ENCODE measurements at regions of chr11 and their contacts with region 1.

Region 1: DNA sequence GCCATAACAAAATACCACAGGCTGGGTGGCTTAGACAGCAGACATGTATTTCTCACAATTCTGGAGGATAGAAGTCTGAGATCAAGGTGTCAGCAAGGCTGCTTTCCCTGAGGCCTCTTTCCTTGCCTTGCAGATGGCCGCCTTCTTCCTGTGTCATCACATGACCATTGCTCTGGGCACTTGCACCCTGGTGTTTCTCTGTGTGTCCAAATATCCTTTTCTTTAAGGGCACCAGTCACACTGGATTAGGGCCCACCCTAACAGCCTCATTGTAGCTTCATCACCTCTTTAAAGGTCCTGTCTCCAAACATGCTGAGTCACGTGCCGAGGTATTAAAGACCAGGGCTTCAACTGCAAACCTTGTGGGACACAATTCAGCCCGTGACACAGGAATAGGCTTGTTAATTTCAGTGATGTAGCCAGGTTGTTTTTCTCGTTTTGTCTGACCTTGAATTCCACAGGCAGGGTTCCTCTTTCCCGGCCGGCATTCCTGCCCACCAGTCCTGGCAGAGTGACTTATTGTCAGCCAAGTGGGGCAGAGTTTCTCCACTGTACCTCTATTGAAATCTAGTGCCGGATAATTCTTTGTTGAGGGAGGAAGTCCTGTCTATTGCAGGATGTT is 100.1 kb downstream of the KCNQ1OT1 start:
- DNase-seq: no peak
- ATAC-seq: no peak

Region 2: DNA sequence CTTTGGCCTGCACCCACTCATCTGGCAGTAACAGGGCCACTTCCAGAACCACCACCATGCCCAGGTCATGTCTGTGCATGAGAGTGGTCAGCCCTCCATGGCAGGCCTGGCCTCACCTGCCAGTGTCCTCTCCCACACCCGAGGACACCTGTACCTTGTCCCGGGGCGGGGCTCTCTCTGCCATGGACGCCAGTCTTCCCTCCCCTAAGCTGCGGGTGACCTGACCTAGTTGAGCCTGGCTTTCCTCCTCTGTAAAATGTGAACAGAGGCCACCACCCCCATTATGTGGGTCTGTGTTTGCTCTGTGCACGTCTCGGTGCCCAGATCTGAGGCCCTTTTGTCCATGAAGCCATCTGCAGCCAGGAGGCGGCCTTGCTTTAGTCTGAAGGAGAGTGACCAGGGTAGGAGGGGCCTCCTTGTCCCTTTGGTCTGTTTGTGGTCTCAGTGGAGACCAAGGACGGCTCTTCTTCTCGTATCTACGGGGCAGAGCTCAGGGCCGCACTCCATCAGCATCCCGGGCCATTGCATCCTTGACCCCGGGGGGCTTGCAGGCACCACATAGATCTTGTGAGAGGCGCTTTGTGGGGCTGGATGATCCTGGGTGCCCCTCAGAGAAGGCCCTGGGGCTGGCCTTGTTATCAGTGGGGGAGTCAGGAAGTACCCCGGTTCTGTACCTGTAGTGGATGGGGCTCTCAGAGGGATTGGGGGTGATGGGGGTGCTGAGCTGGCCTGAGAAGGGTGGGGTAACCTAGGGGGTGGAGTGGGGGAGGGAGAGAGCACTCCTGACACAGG is 33.3 kb before region 1 on chr11:
- intact Hi-C with region 1: loop called (anchors 1 kb)
- DNase-seq: peak; percentile 56
- ATAC-seq: no peak